Psoas muscle (tissue), 8 donors: ENCODE measurements at regions of chr1 and their contacts with region 1.

Region 1: GRCh38 chr1:149927503-149928387 is at the start of gene SF3B4:
- DNase-seq: peak; percentile 96 to 98
- ATAC-seq: peak; percentile 98 to 99 (median 98)
- H3K4me3 ChIP-seq: peak within 1 kb of the TSS; percentile 100
- H3K27ac ChIP-seq: peak within 1 kb of the TSS; percentile 96
- H3K4me1 ChIP-seq: peaks cover 27% of the 10 kb centered on the region
- H3K27me3 ChIP-seq: no peaks in the 10 kb centered on the region
- CTCF ChIP-seq: peak; percentile 13
- total RNA-seq, gene SF3B4: 13.0 to 26.9 (median 21.9) TPM

Region 2: DNA sequence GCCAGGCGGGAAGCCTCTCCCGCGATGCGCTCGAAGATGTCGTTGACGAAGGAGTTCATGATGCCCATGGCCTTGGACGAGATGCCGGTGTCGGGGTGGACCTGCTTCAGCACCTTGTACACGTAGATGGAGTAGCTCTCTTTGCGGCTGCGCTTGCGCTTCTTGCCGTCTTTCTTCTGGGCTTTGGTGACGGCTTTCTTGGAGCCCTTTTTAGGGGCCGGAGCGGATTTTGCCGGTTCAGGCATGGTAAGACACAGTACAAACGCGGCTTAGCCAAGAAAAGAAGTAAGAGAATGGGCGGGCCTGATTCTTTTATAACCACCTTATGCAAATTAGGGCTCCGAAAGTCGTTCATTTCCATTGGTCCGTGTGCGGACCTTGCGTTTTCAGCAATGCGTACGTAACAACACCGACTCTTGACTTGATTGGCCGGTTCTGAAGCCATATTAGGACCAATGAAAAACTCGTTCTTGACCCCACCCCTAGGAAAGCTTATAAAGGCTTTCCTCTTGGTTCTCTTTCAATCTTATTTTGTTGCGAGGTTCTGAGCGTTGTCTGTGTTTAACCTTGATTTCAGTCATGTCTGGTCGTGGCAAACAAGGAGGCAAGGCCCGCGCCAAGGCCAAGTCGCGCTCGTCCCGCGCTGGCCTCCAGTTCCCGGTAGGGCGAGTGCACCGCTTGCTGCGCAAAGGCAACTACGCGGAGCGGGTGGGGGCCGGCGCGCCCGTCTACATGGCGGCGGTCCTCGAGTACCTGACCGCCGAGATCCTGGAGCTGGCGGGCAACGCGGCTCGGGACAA is 41.1 kb before region 1 on chr1:
- intact Hi-C with region 1: loop called (anchors 2 to 5 kb)
- DNase-seq: peak; percentile 76 to 88
- ATAC-seq: peak; percentile 80 to 84 (median 81)
- H3K4me3 ChIP-seq: peak overlapping the region; percentile 79
- H3K27ac ChIP-seq: peak overlapping the region; percentile 98
- H3K4me1 ChIP-seq: peaks cover 19% of the 10 kb centered on the region
- H3K27me3 ChIP-seq: no peaks in the 10 kb centered on the region
- CTCF ChIP-seq: no peak

Region 3: GRCh38 chr1:149997585-149998262 is 70.0 kb after region 1 on chr1:
- intact Hi-C with region 1: no loop called
- DNase-seq: no peak
- ATAC-seq: no peak
- H3K4me3 ChIP-seq: no peak overlapping the region
- H3K27ac ChIP-seq: peak overlapping the region; percentile 39
- H3K4me1 ChIP-seq: peaks cover 77% of the 10 kb centered on the region
- H3K27me3 ChIP-seq: no peaks in the 10 kb centered on the region
- CTCF ChIP-seq: no peak